ENCODE measurements at regions of chr3 and their contacts with region 1.

Region 1: GRCh38 chr3:149657926-149658733 is at the start of gene WWTR1:
- DNase-seq: peak; percentile 94
- ATAC-seq: peak; percentile 86
- H3K4me3 ChIP-seq: peak within 1 kb of the TSS; percentile 70
- H3K27ac ChIP-seq: peak within 1 kb of the TSS; percentile 95
- H3K4me1 ChIP-seq: peaks cover 7% of the 10 kb centered on the region
- H3K27me3 ChIP-seq: no peaks in the 10 kb centered on the region
- CTCF ChIP-seq: peak; percentile 42
- POLR2A ChIP-seq: peak; percentile 95
- RAD21 ChIP-seq: peak; percentile 53
- total RNA-seq, gene WWTR1: 30.3 and 38.9 TPM in 2 replicates

Region 2: DNA sequence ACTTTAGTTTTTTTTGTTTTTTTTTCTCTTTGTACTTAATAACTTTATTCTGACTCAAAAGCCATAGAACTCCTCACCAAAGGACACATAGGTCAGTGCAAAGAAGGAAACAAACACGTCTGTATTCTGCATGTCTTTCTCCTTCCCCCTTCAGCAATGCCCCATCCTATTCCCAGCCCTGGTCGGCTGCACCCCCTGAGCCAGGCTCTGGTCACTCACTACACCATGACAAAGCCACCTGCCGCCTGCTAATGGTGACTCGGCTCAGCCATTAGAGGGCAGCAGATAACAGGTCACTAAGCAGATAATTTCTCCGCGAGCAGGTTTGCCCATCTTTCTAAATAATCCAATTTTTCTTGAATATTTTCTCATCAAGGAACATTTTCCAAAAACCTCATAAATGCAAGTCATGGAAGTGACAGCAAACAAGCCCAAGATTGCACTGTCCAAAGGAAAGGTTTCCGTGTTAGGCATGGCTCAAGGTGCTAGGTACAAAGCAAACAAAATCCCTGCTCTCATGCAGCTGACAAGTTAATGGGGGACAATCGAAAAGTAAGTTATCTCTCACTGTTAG is 145.8 kb before region 1 on chr3:
- CTCF ChIA-PET with region 1: interaction called, 7 read pairs
- POLR2A ChIA-PET with region 1: no interaction called
- dilution Hi-C with region 1: no loop called
- in situ Hi-C with region 1: no loop called
- intact Hi-C with region 1: loop called (anchors 1 kb)
- DNase-seq: peak; percentile 72
- ATAC-seq: peak; percentile 80
- H3K4me3 ChIP-seq: no peak overlapping the region
- H3K27ac ChIP-seq: no peak overlapping the region
- H3K4me1 ChIP-seq: peaks cover 8% of the 10 kb centered on the region
- H3K27me3 ChIP-seq: no peaks in the 10 kb centered on the region
- CTCF ChIP-seq: peak; percentile 88
- POLR2A ChIP-seq: no peak
- RAD21 ChIP-seq: peak; percentile 84

Region 3: GRCh38 chr3:149536429-149536828 is 121.7 kb before region 1 on chr3:
- CTCF ChIA-PET with region 1: interaction called, 6 read pairs
- POLR2A ChIA-PET with region 1: interaction called, 5 read pairs
- dilution Hi-C with region 1: no loop called
- in situ Hi-C with region 1: no loop called
- intact Hi-C with region 1: loop called (anchors 5 kb)
- DNase-seq: no peak
- ATAC-seq: no peak
- H3K4me3 ChIP-seq: no peak overlapping the region
- H3K27ac ChIP-seq: peak overlapping the region; percentile 27; the same call in 1 of the 2 replicates
- H3K4me1 ChIP-seq: peaks cover 31% of the 10 kb centered on the region
- H3K27me3 ChIP-seq: no peaks in the 10 kb centered on the region
- CTCF ChIP-seq: no peak
- POLR2A ChIP-seq: no peak
- RAD21 ChIP-seq: no peak

Region 4: GRCh38 chr3:149575961-149576564 is 82.1 kb before region 1 on chr3:
- CTCF ChIA-PET with region 1: no interaction called
- POLR2A ChIA-PET with region 1: interaction called, 13 read pairs
- dilution Hi-C with region 1: no loop called
- in situ Hi-C with region 1: no loop called
- intact Hi-C with region 1: loop called (anchors 1 kb)
- DNase-seq: peak; percentile 99
- ATAC-seq: peak; percentile 83
- H3K4me3 ChIP-seq: no peak overlapping the region
- H3K27ac ChIP-seq: peak overlapping the region; percentile 92
- H3K4me1 ChIP-seq: peaks cover 31% of the 10 kb centered on the region
- H3K27me3 ChIP-seq: no peaks in the 10 kb centered on the region
- CTCF ChIP-seq: no peak
- POLR2A ChIP-seq: peak; percentile 62; the same call in 1 of the 2 replicates
- RAD21 ChIP-seq: peak; percentile 43

Region 5: DNA sequence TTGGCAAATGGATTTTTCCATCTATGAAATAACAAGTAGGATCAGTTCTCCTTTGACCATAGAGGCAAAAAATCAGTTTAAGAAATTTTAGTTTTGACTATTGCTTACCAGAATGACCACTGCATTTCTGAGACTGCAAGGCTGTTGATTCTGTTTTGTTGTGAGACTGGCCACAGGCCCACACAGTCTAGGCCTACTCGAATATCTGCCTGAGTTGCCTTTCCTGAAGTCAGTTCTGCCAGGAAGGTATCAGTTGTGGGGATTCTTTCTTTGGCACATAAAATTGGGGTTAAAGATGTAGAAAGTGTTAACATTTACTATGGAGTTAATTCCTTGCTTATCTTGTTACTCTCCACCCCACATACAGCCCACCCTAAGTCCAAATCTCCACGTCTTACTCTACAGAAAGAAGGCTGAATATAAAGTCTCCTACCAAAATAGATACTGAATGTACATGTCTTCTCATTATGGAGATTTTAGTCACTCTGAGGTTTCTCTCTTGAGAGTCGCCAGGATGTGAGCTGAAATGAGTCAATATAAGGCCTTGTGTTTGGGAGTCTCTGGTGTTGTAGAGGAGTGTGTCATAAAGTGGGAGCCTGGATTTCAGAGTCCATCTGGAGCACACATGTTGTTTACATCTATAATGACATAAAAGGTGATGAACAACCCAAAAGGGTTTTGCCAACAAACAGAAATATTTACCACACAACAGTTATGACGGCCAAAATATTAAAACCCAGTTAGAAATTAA is 44.7 kb after region 1 on chr3:
- CTCF ChIA-PET with region 1: no interaction called
- POLR2A ChIA-PET with region 1: no interaction called
- dilution Hi-C with region 1: no loop called
- in situ Hi-C with region 1: no loop called
- intact Hi-C with region 1: loop called (anchors 5 kb)
- DNase-seq: peak; percentile 97
- ATAC-seq: peak; percentile 96
- H3K4me3 ChIP-seq: no peak overlapping the region
- H3K27ac ChIP-seq: peak overlapping the region; percentile 85
- H3K4me1 ChIP-seq: peaks cover 8% of the 10 kb centered on the region
- H3K27me3 ChIP-seq: no peaks in the 10 kb centered on the region
- CTCF ChIP-seq: no peak
- POLR2A ChIP-seq: no peak
- RAD21 ChIP-seq: no peak